ENCODE measurements at regions of chr12 and their contacts with region 1.

Region 1: GRCh38 chr12:111599459-111600204 is 517 bp upstream of the ATXN2 start:
- DNase-seq: peak; percentile 96
- H3K4me3 ChIP-seq: peak overlapping the region; percentile 83 to 97 (median 96)
- H3K27ac ChIP-seq: peak overlapping the region; percentile 96 to 99 (median 98)
- H3K4me1 ChIP-seq: peaks cover 0 to 36% (median 32%) of the 10 kb centered on the region in 4 donors
- H3K27me3 ChIP-seq: no peaks in the 10 kb centered on the region
- CTCF ChIP-seq: no peak
- EP300 ChIP-seq: peak in 1 of 4 donors; percentile 1
- POLR2A ChIP-seq: peak; percentile 81 to 84

Region 2: DNA sequence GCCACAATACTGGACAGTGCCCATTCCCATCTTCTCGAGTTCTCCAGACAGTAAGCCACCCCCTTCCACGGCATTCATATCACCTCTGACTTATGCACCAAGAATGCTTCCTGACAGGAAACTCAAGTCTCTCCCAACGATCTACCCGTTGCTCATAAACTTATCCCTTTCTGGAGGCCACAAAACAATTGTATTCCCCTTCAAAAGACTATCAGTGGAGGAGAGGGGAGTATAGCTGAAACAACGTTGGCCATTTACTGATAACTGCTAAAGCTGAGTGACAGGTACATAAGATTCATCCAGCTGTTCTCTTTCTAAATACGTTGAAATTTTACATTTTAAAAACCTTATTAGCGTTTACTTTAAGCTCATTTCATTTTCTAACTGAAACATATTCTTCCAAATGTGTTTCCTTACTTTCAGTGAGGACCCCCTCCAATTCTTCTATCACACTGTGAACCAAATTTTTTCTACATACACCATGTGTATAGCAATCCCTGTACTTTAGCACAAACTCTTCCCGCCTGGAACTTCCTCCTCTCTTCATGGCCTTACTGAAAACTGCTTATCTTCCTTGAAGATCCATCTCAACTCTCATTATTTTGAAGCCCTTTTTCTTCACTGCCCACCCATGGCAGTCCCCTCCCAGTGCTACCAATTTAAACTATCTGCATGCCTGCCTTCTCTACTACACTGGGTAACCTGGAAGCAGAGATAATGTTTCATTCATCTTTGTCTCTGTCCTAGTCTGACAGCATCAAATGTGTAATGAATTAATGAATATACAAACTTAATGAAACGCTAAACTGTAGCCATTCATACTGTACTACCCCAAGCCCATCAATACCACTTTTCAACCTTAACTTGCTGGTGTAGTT is 29.3 kb before region 1 on chr12:
- intact Hi-C with region 1: loop called (anchors 1 kb)
- DNase-seq: no peak
- H3K4me3 ChIP-seq: no peak overlapping the region
- H3K27ac ChIP-seq: no peak overlapping the region
- H3K4me1 ChIP-seq: peaks cover 0 to 39% (median 29%) of the 10 kb centered on the region in 4 donors
- H3K27me3 ChIP-seq: no peaks in the 10 kb centered on the region
- CTCF ChIP-seq: no peak
- EP300 ChIP-seq: no peak
- POLR2A ChIP-seq: no peak

Region 3: DNA sequence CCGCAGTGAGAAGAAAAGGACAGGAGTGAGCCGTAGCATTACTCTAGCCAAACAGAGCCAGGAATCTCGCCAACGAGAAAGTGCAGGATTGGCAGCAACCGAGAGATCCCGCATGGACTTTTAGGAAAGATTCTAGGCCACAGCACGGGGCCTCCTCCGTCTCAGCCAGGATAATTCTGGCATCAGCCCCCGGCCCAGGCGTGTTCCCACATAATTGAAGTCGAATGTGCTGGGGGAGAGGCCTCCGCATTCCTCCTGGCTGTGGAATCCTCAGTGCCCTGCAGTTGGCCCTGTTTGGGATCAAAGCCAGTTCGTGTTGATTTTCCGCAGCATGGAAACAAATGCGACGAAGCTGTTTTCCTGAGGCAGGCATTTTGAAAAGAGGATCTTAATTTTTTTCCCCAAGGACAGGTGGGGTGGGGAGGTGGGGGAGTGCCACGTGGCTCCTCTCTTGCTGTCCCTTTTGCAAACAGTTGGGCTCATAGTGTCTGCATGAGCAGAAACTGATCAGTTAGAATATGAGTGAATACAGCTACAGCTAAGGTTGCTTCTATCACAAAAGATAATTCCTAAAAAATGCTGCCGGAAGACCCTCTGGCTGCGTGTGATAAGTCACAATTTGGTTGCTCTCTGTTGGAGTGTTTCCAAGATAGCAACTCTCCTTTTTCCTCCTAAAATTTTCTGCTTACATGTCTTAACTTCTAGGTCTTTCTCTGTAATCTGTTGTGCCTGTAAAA is 36.7 kb after region 1 on chr12:
- intact Hi-C with region 1: loop called (anchors 5 kb)
- DNase-seq: peak; percentile 90
- H3K4me3 ChIP-seq: peak overlapping the region in 3 of 4 donors; percentile 4 to 23 (median 11)
- H3K27ac ChIP-seq: peak overlapping the region; percentile 70 to 78 (median 76)
- H3K4me1 ChIP-seq: peaks cover 0 to 24% (median 22%) of the 10 kb centered on the region in 4 donors
- H3K27me3 ChIP-seq: no peaks in the 10 kb centered on the region
- CTCF ChIP-seq: no peak
- EP300 ChIP-seq: no peak
- POLR2A ChIP-seq: no peak

Region 4: GRCh38 chr12:111685744-111686517 is 86.3 kb after region 1 on chr12 and contains the starts of genes ACAD10 and BRAP:
- intact Hi-C with region 1: loop called (anchors 5 kb)
- DNase-seq: peak; percentile 96
- H3K4me3 ChIP-seq: peak within 1 kb of the TSS; percentile 80 to 94 (median 93)
- H3K27ac ChIP-seq: peak within 1 kb of the TSS; percentile 82 to 91 (median 88)
- H3K4me1 ChIP-seq: peaks cover 0 to 35% (median 25%) of the 10 kb centered on the region in 4 donors
- H3K27me3 ChIP-seq: no peaks in the 10 kb centered on the region
- CTCF ChIP-seq: no peak
- EP300 ChIP-seq: peak in 1 of 4 donors; percentile 25
- POLR2A ChIP-seq: peak; percentile 64 to 70
- total RNA-seq, gene ACAD10: 9.4 to 31.0 (median 18.2) TPM
- total RNA-seq, gene BRAP: 19.5 to 29.5 (median 20.7) TPM